Aorta (tissue), 5 donors: ENCODE measurements at regions of chr3 and their contacts with region 1.

Region 1: GRCh38 chr3:133040696-133041523 is 2.7 kb downstream of the TMEM108 start:
- DNase-seq: peak; percentile 74 to 77
- ATAC-seq: peak; percentile 88
- H3K4me3 ChIP-seq: no peak overlapping the region
- H3K27ac ChIP-seq: no peak overlapping the region
- H3K4me1 ChIP-seq: no peaks in the 10 kb centered on the region
- H3K27me3 ChIP-seq: no peaks in the 10 kb centered on the region

Region 2: GRCh38 chr3:132730891-132731580 is 309.9 kb before region 1 on chr3:
- intact Hi-C with region 1: loop called (anchors 5 kb)
- DNase-seq: no peak
- ATAC-seq: peak; percentile 78
- H3K4me3 ChIP-seq: no peak overlapping the region
- H3K27ac ChIP-seq: no peak overlapping the region
- H3K4me1 ChIP-seq: no peaks in the 10 kb centered on the region
- H3K27me3 ChIP-seq: no peaks in the 10 kb centered on the region

Region 3: DNA sequence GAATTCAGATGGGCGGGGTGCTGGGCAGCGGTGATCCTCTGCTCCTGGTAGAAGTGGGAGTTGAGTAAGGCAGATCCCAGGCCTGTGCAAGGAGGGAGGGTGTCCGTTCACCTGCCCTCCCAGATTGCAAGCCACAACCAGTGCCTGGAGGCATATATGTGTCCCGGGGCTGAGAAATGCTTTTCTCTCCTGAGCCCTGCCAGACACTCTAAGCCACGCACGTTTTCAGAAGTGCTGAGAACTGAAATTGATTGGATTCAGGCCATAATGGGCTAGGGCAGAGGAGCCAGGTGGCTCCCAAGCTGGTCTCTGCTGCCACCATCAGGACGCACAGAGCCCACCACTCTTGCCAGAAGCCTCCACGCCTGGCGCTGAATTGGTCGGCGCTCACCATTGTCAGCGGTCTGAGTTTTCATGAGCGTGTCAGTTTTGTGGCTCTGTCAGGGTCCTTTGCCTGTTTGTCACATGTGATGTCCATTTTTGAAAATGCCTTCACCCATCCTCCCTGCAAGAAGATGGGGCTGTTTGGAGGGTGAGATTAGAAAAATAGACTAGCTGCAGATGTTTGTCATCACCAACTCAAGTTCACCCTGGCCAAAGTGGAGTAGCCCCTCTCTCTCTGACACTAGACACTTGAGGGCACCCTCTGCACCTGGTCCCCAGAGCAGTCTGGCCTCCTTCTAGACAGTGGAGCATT is 343.6 kb after region 1 on chr3:
- intact Hi-C with region 1: loop called (anchors 2 to 5 kb)
- DNase-seq: peak in 1 of 2 donors; percentile 50
- ATAC-seq: peak; percentile 72
- H3K4me3 ChIP-seq: no peak overlapping the region
- H3K27ac ChIP-seq: no peak overlapping the region
- H3K4me1 ChIP-seq: no peaks in the 10 kb centered on the region
- H3K27me3 ChIP-seq: no peaks in the 10 kb centered on the region

Region 4: DNA sequence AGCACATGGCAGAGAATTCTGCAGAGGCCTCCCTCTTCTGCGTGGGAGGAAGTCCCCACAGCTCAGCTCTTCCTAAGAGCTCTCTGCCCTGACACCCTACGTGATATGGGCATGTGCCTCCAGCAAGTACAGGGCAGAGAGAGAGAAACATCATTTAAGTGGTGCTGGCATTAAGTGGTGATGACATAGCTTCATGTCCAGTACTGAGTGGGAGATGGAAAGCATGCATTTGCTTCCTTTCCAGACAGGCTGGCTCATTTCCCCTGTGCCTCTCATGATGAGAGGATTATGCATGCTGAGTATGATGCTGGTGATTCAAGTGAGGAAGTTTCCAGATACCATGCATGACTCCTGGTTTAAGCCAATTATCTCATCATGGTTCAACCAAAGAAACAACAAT is 385.8 kb after region 1 on chr3:
- intact Hi-C with region 1: loop called in 1 of 2 experiments (anchors 2 kb)
- DNase-seq: no peak
- ATAC-seq: no peak
- H3K4me3 ChIP-seq: no peak overlapping the region
- H3K27ac ChIP-seq: no peak overlapping the region
- H3K4me1 ChIP-seq: no peaks in the 10 kb centered on the region
- H3K27me3 ChIP-seq: no peaks in the 10 kb centered on the region